Heart right ventricle (tissue), 16 donors: ENCODE measurements at regions of chr1 and their contacts with region 1.

Region 1: DNA sequence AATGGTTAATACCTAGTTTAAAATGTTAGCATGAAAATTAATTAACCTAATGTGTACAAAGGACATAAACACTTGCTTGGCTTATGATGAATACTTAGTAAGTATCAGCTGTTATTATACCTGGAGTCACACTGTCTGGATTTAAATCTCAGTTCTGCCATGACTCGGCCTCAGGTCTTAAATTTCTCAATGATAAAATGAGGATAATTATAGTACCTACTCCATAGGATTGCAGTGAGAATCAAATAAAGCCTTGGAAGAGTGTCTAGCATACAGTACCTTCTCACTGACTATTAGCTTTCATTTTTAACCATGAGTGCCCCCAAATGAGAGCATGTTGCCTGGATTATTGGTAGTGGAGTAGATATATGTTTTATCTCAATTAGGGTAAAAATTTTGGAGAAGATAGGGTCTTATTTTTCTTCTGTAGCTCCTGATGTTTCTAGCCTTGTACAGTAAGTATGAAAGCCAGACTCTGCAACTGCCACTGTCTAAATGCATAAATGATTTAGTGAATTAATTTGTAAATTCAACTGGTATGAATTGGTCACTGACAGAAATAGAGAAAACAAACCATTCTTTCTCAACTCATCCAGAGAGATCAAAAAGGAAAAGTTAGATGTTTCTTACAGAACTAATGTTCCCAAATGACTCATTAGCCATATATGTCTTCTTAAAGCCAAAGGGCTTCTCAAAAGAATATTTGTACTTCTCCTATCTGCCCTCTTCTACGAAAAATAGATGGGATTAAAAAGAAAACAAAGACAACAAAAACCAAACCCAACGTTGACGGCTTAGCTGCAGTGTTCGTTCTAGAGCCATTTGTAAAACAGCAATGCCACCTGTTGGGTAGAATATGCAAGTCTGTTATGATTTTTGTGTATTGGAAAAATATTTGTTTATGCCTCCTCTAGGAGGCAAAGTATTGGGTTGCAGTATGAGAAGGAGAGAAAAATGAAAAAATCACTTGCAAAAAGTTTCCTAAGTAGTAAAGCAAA is 53.8 kb upstream of the MROH9 start:
- DNase-seq: peak in 1 of 2 donors; percentile 9
- ATAC-seq: peak in 6 of 8 donors; percentile 60 to 72 (median 70)
- H3K4me3 ChIP-seq: peak overlapping the region in 6 of 10 donors; percentile 8 to 40 (median 22)
- H3K27ac ChIP-seq: peak overlapping the region in 1 of 10 donors; percentile 27
- H3K4me1 ChIP-seq: peaks cover 0 to 12% (median 0%) of the 10 kb centered on the region in 9 donors
- H3K27me3 ChIP-seq: no peaks in the 10 kb centered on the region
- CTCF ChIP-seq: peak in 8 of 9 donors; percentile 50 to 80 (median 67)

Region 2: GRCh38 chr1:169928438-169929209 is 952.9 kb before region 1 on chr1:
- intact Hi-C with region 1: loop called in 4 of 10 experiments (anchors 5 to 10 kb)
- DNase-seq: no peak
- ATAC-seq: peak in 2 of 8 donors; percentile 56 to 61
- H3K4me3 ChIP-seq: no peak overlapping the region
- H3K27ac ChIP-seq: no peak overlapping the region
- H3K4me1 ChIP-seq: peaks cover 0 to 16% (median 7%) of the 10 kb centered on the region in 9 donors
- H3K27me3 ChIP-seq: no peaks in the 10 kb centered on the region
- CTCF ChIP-seq: peak; percentile 45 to 86 (median 74)

Region 3: DNA sequence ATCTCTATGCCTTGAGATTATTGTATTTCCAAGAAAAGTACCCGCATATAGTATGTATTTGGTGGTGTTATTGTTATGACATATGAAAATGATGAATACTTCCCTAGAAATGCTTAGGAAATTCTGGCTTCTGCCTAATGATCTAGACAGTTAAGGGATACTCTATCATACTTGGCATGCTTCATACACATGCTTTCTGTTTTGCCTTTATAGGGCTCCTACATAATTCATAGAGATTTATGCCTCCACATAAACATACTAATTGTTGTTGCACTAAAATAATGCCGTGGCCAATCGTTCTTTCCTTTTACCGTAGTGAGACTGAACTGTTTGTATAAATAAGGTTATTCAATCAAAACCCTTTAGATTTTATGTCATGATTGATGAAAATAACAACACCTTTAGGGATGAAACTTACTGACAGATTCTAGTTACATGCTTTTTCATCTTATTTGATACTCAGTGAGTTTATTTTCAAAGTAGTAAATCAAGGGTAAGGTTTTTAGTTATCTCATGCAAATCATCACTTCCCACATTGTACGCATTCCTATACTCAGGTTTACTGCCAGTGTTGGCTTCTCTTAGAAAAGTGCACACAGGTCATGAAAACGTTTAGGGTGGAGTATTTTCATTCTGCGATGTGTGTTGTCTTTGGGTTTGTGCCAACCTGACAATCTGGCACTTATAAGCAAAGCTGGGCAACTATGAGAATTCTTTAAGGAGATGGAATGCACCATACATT is 947.4 kb before region 1 on chr1:
- intact Hi-C with region 1: loop called in 4 of 10 experiments (anchors 5 to 10 kb)
- DNase-seq: no peak
- ATAC-seq: no peak
- H3K4me3 ChIP-seq: no peak overlapping the region
- H3K27ac ChIP-seq: no peak overlapping the region
- H3K4me1 ChIP-seq: peaks cover 0 to 13% (median 0%) of the 10 kb centered on the region in 9 donors
- H3K27me3 ChIP-seq: no peaks in the 10 kb centered on the region
- CTCF ChIP-seq: no peak

Region 4: DNA sequence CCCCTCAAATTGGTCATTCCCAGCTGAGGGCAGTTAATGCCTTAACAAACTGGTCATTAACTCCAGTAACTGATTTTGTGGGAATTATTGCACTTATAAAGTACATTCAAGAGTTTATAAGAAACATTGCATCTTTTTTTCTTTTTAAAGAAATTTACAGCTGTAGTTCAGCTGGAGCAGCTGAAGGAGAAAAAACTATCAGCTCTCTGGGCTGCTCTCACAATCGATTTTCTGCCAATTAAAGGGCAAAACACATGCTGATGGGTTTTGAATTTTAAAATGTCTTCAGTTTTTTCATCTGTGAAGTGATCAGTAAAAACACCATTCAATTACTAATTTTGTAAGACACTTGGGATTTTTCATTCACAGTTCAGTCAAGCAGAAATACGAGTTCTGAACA is 881.8 kb before region 1 on chr1:
- intact Hi-C with region 1: loop called in 1 of 10 experiments (anchors 10 kb)
- DNase-seq: no peak
- ATAC-seq: no peak
- H3K4me3 ChIP-seq: no peak overlapping the region
- H3K27ac ChIP-seq: peak overlapping the region in 4 of 10 donors; percentile 18 to 48 (median 29)
- H3K4me1 ChIP-seq: peaks cover 0 to 15% (median 0%) of the 10 kb centered on the region in 9 donors
- H3K27me3 ChIP-seq: no peaks in the 10 kb centered on the region
- CTCF ChIP-seq: no peak

Region 5: DNA sequence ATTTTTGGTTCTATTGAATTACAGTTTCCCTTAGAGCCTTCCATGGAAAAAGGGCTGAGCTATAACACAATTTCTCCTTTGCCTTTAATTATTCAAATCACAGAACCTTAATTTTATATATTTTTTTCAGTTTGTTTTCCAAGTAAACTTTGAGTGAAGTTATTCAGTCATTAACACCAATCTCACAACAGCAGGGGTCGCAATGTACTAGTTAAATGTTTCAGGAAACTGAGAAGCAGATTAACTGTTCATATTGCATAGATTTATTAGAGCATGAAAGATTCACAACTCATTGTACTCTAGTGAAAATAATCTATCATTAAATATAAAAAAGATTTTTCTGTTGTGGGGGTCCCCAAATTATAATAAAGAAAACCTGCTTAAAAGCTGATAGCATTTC is 871.1 kb before region 1 on chr1:
- intact Hi-C with region 1: loop called in 4 of 10 experiments (anchors 5 to 10 kb)
- DNase-seq: peak in 1 of 2 donors; percentile 64
- ATAC-seq: no peak
- H3K4me3 ChIP-seq: no peak overlapping the region
- H3K27ac ChIP-seq: no peak overlapping the region
- H3K4me1 ChIP-seq: no peaks in the 10 kb centered on the region
- H3K27me3 ChIP-seq: no peaks in the 10 kb centered on the region
- CTCF ChIP-seq: peak in 8 of 9 donors; percentile 26 to 73 (median 56)

Region 6: DNA sequence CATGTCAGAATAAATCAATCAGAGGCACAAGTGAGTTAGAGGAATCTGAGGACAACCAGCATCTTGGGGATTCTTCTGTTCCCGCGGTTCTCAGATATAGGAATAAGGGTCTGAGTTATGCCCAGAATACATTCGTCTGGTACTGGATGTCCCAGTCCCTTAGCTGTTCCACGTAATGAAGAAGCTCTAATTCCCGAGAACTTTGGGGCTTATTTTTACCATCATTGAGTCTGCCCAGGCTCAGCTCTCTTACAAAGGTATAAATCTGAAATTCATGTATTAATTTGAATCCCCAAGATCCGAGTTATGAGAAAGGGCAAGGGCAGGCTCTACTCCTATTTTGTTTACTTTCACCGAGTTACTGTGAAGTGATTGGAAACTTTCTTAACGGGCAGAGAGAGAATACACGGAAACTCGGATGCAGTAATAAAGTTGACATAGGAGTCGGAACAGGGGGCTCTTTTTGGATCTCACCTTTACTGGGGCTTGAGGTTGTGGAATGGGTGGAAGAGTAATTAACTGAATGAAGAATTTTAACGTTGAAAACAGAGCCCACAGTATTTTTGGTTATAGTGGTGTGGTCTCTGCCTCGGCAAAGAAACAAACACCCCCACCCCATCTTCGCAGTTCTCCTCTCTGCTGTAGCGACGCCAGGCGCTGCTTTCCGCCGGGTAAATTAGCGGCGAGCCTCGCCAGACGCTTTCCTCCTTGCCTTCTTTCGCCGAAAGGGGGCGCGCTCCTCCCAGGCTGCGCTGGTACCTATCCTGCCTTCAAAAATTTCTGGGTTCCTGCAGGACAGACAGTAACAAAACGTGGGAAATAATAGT is 210.6 kb before region 1 on chr1:
- intact Hi-C with region 1: loop called in 7 of 10 experiments (anchors 5 to 10 kb)
- DNase-seq: peak; percentile 56 to 74
- ATAC-seq: peak in 7 of 8 donors; percentile 31 to 73 (median 62)
- H3K4me3 ChIP-seq: peak overlapping the region in 2 of 10 donors; percentile 2 to 9
- H3K27ac ChIP-seq: peak overlapping the region in 5 of 10 donors; percentile 4 to 98 (median 17)
- H3K4me1 ChIP-seq: peaks cover 0 to 77% (median 35%) of the 10 kb centered on the region in 9 donors
- H3K27me3 ChIP-seq: peaks cover 0 to 79% (median 16%) of the 10 kb centered on the region in 7 donors
- CTCF ChIP-seq: peak; percentile 49 to 72 (median 69)

Region 7: DNA sequence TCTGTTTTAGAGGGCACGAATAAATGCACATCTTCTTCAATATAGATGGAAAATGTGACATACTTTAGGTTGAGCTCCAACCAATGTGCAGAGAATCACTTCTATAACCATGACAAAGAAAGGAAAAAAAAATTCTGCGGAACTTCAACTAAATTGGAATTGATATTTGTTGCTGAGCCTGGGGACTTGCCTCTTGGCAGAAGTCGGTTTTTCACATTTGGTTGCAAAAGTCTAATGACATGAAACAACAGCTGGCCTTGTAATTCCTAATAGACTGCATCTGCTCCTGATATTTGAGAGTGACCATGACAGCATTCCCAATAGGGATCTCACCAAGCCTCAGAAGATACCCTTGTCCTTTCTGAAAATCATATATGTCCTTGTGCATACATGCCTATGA is 104.8 kb before region 1 on chr1:
- intact Hi-C with region 1: loop called in 1 of 10 experiments (anchors 10 kb)
- DNase-seq: peak in 1 of 2 donors; percentile 15
- ATAC-seq: peak in 6 of 8 donors; percentile 28 to 89 (median 54)
- H3K4me3 ChIP-seq: no peak overlapping the region
- H3K27ac ChIP-seq: peak overlapping the region in 1 of 10 donors; percentile 40
- H3K4me1 ChIP-seq: no peaks in the 10 kb centered on the region
- H3K27me3 ChIP-seq: no peaks in the 10 kb centered on the region
- CTCF ChIP-seq: no peak

Region 8: GRCh38 chr1:170929835-170930554 is 48.4 kb after region 1 on chr1:
- intact Hi-C with region 1: no loop called
- DNase-seq: peak in 1 of 2 donors; percentile 6
- ATAC-seq: peak; percentile 69 to 94 (median 92)
- H3K4me3 ChIP-seq: peak overlapping the region in 2 of 10 donors; percentile 9 to 17
- H3K27ac ChIP-seq: peak overlapping the region in 6 of 10 donors; percentile 8 to 55 (median 44)
- H3K4me1 ChIP-seq: peaks cover 0 to 17% (median 7%) of the 10 kb centered on the region in 9 donors
- H3K27me3 ChIP-seq: no peaks in the 10 kb centered on the region
- CTCF ChIP-seq: peak; percentile 46 to 84 (median 73)

Region 9: DNA sequence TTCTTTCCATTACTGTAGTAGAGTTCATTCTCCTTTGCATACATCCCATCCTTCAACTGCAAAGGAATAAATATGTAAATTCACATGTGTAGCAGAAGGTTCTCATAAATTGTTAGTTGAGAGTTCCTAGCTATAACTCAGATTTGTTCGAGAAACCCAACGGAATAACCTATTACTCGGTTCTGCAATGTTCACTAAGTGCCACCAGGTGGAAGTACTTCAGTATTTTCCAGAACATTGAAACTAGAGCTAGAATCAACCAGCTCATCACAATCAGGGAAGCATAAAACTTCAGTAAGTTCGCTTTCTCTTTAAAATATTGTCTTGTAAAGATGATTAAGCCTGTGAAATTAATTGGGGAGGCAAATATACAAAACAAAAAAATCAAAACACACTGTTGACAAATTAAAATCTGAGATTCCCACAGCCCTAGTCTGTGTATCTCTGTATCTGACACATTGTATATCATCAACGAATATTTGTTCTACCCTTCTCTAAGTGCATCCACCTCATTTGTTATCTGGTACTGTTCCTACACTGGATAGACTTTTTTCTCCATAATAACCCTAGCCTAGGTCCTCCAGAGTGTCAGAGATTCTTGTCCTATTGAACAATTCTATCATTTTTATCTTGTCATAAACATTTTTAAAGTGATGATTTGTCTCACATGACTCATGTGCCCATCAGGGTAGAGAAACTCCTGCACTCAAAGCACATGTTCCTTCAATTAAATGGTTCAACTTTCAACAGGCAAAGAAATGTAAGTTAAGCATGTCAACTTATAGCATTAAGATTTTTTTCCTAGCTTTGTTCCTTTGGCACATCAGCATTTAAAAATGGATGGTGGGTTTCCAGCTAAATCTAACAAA is 85.7 kb after region 1 on chr1:
- intact Hi-C with region 1: no loop called
- DNase-seq: peak in 1 of 2 donors; percentile 11
- ATAC-seq: peak in 2 of 8 donors; percentile 50 to 64
- H3K4me3 ChIP-seq: no peak overlapping the region
- H3K27ac ChIP-seq: no peak overlapping the region
- H3K4me1 ChIP-seq: peaks cover 0 to 4% (median 0%) of the 10 kb centered on the region in 9 donors
- H3K27me3 ChIP-seq: no peaks in the 10 kb centered on the region
- CTCF ChIP-seq: peak; percentile 49 to 79 (median 69)